ENCODE measurements at regions of chr14 and their contacts with region 1.

Region 1: GRCh38 chr14:90383075-90383730 is 13.6 kb upstream of the CALM1 start:
- DNase-seq: peak; percentile 100
- ATAC-seq: peak; percentile 92
- H3K4me3 ChIP-seq: peak overlapping the region; percentile 82
- H3K27ac ChIP-seq: peak overlapping the region; percentile 86
- H3K4me1 ChIP-seq: peaks cover 35% of the 10 kb centered on the region
- H3K27me3 ChIP-seq: no peaks in the 10 kb centered on the region
- CTCF ChIP-seq: 0 out of 2 replicates have a peak, but pooled peaks have one; percentile 10

Region 2: DNA sequence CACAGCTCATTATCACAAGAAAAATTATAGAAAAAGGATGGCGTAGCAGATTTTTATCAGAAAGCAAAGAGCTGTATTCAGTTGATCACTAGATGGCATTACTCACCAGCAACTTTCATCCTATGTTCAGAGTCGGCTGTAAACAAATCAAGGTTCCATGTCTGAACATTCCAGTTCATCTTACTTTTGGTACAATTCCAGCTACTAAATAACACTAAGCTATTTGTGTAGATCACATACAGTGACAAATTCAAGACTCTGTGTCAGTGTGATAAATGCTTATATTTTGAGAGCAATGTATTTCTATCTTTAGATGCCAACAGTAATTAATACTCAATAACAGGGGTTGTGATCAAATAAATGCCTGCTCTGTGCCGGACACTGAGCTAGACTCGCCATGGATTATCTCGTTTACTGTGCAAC is 81.5 kb before region 1 on chr14:
- CTCF ChIA-PET with region 1: interaction called, 4 read pairs
- POLR2A ChIA-PET with region 1: no interaction called
- intact Hi-C with region 1: loop called (anchors 2 kb)
- DNase-seq: peak; percentile 60
- ATAC-seq: peak; percentile 69
- H3K4me3 ChIP-seq: no peak overlapping the region
- H3K27ac ChIP-seq: no peak overlapping the region
- H3K4me1 ChIP-seq: no peaks in the 10 kb centered on the region
- H3K27me3 ChIP-seq: no peaks in the 10 kb centered on the region
- CTCF ChIP-seq: peak; percentile 66

Region 3: DNA sequence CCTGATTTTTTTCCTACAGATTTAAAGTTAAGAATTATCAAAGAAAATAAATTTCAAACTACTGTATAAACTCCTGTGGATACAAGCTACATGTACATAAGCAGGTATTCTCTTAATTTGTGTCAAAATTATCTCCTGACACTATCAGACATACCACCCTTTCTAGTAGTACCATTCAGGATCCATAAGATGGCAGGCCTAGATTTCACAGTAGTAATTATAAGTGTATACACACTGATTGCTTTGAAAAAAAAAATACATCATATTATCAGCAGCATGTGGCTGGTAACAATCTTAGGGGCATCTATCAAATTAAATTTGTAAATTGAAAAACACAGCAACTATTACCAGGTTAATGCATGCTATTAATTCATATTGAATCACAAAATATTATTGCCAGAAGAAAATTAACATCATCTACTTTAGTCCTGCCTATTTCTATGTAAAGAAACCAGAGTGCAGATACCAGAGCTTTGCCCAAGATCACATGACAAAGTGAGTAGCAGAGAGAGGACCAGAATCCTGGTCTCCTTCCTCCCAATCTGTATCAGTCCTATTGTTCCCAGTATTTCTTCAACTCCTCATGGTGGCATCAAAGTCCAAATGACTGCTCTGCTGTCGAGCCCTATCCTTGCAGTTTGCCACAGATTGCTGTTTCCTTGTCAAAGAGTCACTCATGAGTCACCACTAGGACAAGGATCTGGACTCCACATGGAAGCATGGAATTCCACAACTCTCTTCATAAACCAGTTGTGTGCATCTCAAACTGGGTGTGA is 14.1 kb before region 1 on chr14:
- CTCF ChIA-PET with region 1: no interaction called
- POLR2A ChIA-PET with region 1: no interaction called
- intact Hi-C with region 1: loop called (anchors 1 kb)
- DNase-seq: peak; percentile 66
- ATAC-seq: peak; percentile 95
- H3K4me3 ChIP-seq: no peak overlapping the region
- H3K27ac ChIP-seq: no peak overlapping the region
- H3K4me1 ChIP-seq: peaks cover 6% of the 10 kb centered on the region
- H3K27me3 ChIP-seq: no peaks in the 10 kb centered on the region
- CTCF ChIP-seq: peak; percentile 46

Region 4: DNA sequence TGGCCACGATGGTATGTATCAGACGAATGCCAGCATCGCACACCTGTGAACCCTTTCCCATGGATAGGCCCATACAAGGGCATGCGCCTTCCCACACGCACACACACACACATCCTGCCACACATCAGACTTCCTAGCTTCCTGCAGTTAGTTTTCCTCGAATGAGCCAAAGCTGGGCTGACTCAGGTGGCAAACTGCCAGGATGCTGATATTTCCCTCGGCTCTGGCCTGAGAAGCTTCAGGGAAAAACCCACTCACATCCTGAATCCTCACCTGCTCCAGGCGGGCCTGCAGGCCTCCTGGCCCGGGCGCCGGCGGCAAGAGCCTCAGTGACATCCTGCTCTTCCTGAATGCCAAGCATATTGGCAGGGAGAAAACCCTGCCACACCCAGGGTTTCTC is 36.0 kb after region 1 on chr14:
- CTCF ChIA-PET with region 1: interaction called, 3 read pairs
- POLR2A ChIA-PET with region 1: no interaction called
- intact Hi-C with region 1: loop called (anchors 2 kb)
- DNase-seq: peak; percentile 100
- ATAC-seq: peak; percentile 97
- H3K4me3 ChIP-seq: no peak overlapping the region
- H3K27ac ChIP-seq: peak overlapping the region; percentile 87
- H3K4me1 ChIP-seq: peaks cover 15% of the 10 kb centered on the region
- H3K27me3 ChIP-seq: no peaks in the 10 kb centered on the region
- CTCF ChIP-seq: no peak

Region 5: DNA sequence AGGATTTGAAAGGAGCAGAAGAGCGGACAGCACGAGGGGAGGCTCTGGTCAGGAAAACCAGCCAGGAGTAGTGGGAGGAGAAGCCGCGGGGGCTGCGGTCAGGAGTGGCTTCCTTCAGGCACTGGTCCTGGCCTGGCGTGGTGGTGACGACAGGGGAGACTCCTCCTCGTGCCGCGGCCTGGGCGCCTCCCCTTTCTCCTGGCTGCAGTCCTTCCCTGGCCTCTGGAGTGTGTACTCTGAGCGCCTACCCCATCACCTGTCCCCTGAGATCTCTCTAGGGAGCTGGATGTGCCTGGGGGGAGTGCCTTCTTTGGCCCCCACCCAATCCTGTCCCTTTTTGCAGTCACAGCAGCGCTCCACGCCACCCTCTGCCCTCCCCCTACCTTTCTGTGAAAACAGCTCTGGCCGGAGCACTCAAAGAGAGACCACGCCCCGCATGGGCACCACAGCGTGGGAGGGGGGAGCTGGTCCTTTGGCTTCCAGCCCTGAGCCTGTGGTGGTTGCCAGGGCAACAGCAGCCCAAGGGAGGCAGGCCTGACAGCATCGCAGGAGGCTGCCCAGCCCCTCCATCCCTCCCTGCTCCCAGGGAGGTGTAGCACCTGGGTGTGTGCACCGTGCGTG is 139.5 kb after region 1 on chr14:
- CTCF ChIA-PET with region 1: no interaction called
- POLR2A ChIA-PET with region 1: no interaction called
- intact Hi-C with region 1: no loop called
- DNase-seq: peak; percentile 72
- ATAC-seq: peak; percentile 58
- H3K4me3 ChIP-seq: no peak overlapping the region; the same call in 1 of the 2 replicates
- H3K27ac ChIP-seq: no peak overlapping the region
- H3K4me1 ChIP-seq: peaks cover 11% of the 10 kb centered on the region
- H3K27me3 ChIP-seq: no peaks in the 10 kb centered on the region
- CTCF ChIP-seq: no peak

Region 6: DNA sequence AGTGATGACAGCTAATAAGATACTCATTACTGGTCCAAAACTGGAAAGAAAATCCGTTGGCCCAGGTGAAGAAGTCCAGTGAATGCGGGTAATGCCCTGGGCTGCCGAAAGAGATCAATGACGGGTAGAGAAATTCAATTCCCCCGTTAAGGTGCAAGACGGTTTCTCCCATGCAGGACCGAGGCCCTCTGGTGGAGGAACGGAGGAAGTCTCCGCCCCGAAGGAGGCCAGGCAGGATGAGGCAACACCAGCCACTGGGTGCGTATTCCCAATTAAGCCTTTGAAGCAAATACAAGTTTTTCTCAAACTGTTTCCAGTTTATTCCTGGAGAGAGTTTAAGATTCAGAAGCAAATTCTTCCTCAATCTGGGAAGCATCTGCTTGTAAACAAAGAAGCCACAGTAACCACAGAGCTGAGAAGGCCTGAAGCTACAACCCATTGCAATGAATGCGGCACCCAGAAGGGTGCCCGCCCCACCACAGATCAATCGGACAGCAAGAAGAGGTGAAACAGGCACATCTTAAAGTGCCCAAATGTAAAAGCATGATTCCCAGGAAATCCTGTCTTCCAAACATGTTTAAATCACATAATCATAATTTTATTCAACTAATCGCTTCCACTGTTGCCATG is 314.5 kb after region 1 on chr14:
- CTCF ChIA-PET with region 1: no interaction called
- POLR2A ChIA-PET with region 1: no interaction called
- intact Hi-C with region 1: loop called (anchors 5 kb)
- DNase-seq: peak; percentile 82
- ATAC-seq: peak; percentile 97
- H3K4me3 ChIP-seq: no peak overlapping the region
- H3K27ac ChIP-seq: no peak overlapping the region
- H3K4me1 ChIP-seq: 0 out of 2 replicates have a peak, but pooled peaks cover 3% of the 10 kb centered on the region
- H3K27me3 ChIP-seq: no peaks in the 10 kb centered on the region
- CTCF ChIP-seq: peak; percentile 98

Region 7: GRCh38 chr14:90827916-90828610 is 444.9 kb after region 1 on chr14:
- CTCF ChIA-PET with region 1: no interaction called
- POLR2A ChIA-PET with region 1: no interaction called
- intact Hi-C with region 1: loop called (anchors 10 kb)
- DNase-seq: peak; percentile 91
- ATAC-seq: peak; percentile 100
- H3K4me3 ChIP-seq: peak overlapping the region; percentile 61
- H3K27ac ChIP-seq: no peak overlapping the region
- H3K4me1 ChIP-seq: peaks cover 10% of the 10 kb centered on the region
- H3K27me3 ChIP-seq: no peaks in the 10 kb centered on the region
- CTCF ChIP-seq: no peak

Region 8: GRCh38 chr14:91149479-91149921 is 766.3 kb after region 1 on chr14:
- CTCF ChIA-PET with region 1: no interaction called
- POLR2A ChIA-PET with region 1: no interaction called
- intact Hi-C with region 1: loop called (anchors 1 kb)
- DNase-seq: peak; percentile 100
- ATAC-seq: peak; percentile 98
- H3K4me3 ChIP-seq: no peak overlapping the region
- H3K27ac ChIP-seq: peak overlapping the region; percentile 43
- H3K4me1 ChIP-seq: peaks cover 12% of the 10 kb centered on the region
- H3K27me3 ChIP-seq: no peaks in the 10 kb centered on the region
- CTCF ChIP-seq: no peak